Breast epithelium (tissue), 4 donors: ENCODE measurements at regions of chr10 and their contacts with region 1.

Region 1: DNA sequence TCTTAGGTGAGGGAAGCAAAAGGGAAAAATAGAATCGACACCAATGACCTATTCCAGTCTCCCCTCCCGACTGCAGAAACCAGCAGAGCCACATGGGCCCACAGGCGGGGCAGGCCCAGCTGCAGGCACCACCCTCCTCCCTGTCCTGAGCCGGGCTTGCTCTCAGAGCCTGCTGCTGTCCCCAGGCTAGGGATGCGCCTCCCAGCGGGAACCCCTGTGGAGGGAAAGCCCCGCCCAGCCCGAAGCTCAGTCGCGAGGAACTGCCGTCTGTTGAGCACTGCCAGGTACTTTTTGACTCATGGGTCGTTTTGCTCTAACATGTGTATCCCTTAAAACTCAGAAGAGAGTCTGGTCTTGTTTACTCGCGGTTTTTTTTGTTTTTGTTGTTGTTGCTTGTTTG is 124.5 kb upstream of the RET start:
- DNase-seq: peak; percentile 18 to 64
- H3K4me3 ChIP-seq: peak overlapping the region in 2 of 3 donors; percentile 5 to 32
- H3K27ac ChIP-seq: no peak overlapping the region
- H3K4me1 ChIP-seq: no peaks in the 10 kb centered on the region
- H3K27me3 ChIP-seq: no peaks in the 10 kb centered on the region
- CTCF ChIP-seq: no peak
- POLR2A ChIP-seq: no peak

Region 2: GRCh38 chr10:43000651-43001423 is 48.5 kb after region 1 on chr10:
- intact Hi-C with region 1: no loop called
- DNase-seq: no peak
- H3K4me3 ChIP-seq: no peak overlapping the region
- H3K27ac ChIP-seq: no peak overlapping the region
- H3K4me1 ChIP-seq: no peaks in the 10 kb centered on the region
- H3K27me3 ChIP-seq: no peaks in the 10 kb centered on the region
- CTCF ChIP-seq: no peak
- POLR2A ChIP-seq: no peak

Region 3: DNA sequence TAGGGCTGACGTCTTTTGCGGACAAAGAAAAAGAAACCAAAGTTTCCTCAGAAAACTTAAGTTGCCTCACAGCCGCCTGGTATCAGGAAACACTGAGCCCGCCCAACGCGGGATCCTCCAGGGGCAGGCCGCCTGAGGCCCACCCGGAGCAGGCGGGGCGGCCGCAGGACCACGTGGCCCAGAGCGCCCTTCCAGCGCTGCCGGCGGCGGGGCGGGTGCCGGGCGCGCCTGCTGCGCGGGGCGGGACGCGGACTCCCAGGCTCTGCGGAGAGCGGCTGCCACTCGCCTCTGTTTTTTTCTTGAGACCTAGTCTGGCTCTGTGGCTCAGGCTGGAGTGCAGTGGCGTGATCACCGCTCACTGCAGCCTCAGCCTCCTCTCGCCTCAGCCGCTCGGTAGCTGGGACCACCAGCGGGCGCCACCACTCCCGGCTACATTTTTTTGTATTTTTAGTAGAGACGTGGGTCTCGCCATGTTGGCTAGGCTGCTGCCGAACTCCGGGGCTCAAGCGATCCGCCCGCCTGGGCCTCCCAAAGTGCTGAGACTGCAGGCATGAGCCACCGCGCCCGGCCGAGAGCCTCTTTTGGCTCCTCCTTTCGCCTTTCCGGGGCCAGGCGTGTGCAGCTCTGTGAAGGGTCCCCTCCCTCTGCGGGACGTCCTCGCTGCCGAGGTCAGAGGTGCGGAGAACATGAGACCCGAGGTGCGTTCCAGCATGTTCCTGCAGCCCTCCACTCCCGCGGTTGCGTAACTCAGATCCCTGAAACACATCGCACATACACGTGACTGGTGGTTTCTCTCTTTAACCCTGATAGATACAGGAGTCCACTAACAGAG is 468.2 kb after region 1 on chr10:
- intact Hi-C with region 1: loop called (anchors 5 kb)
- DNase-seq: peak; percentile 67 to 73
- H3K4me3 ChIP-seq: peak overlapping the region; percentile 50 to 64 (median 63)
- H3K27ac ChIP-seq: peak overlapping the region; percentile 90 to 94
- H3K4me1 ChIP-seq: no peaks in the 10 kb centered on the region
- H3K27me3 ChIP-seq: no peaks in the 10 kb centered on the region
- CTCF ChIP-seq: no peak
- POLR2A ChIP-seq: peak; percentile 7